Left colon (tissue), 2 donors: ENCODE measurements at regions of chr1 and their contacts with region 1.

Region 1: GRCh38 chr1:88973520-88974137 is 18.8 kb downstream of the KYAT3 start:
- DNase-seq: no peak
- ATAC-seq: no peak

Region 2: DNA sequence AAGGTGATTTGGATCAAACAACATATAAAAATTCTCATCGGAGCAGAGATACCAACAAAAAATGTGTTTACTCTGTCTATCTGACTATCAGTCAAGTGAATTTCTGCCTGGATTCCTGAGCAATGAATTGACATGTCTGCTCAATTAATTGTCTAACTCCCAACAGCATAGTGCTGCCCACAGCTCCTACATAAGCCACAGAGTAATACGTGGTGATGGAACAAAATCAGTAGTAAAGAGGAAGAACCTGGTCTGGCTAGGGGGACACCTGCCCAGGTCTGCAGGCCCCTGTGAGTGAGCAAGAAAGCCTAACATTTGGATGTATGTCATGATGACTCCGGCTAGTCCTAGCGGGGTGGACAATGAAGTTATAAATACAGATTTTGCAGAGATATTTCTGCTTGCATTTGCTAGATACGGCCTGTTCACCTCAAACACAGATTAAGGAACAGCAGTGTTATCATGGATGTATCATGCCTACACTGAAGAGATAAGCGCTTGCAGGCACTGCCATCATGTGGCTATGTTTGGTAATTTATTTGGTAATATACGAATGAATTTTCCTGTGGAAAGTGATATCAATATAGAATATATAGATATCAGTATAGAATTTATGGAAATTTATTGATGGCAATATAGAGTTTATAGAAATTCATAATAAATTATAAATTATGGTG is 481.4 kb after region 1 on chr1:
- intact Hi-C with region 1: loop called in 1 of 2 experiments (anchors 10 kb)
- DNase-seq: peak in 1 of 2 donors; percentile 41
- ATAC-seq: peak; percentile 73